ENCODE measurements at regions of chrX and their contacts with region 1.

Region 1: GRCh38 chrX:40013266-40014195 is 84.2 kb downstream of the BCOR start:
- DNase-seq: peak; percentile 67
- ATAC-seq: peak; percentile 73
- H3K4me3 ChIP-seq: peak overlapping the region; percentile 59 to 77 (median 70); a peak in 5 of 6 replicates
- H3K27ac ChIP-seq: peak overlapping the region; percentile 98
- H3K4me1 ChIP-seq: peaks cover 27% of the 10 kb centered on the region
- H3K27me3 ChIP-seq: no peaks in the 10 kb centered on the region
- CTCF ChIP-seq: 0 out of 2 replicates have a peak, but pooled peaks have one; percentile 0
- EP300 ChIP-seq: no peak
- POLR2A ChIP-seq: no peak; a peak in 2 of 4 replicates
- RAD21 ChIP-seq: no peak; the same call in 1 of the 2 replicates

Region 2: DNA sequence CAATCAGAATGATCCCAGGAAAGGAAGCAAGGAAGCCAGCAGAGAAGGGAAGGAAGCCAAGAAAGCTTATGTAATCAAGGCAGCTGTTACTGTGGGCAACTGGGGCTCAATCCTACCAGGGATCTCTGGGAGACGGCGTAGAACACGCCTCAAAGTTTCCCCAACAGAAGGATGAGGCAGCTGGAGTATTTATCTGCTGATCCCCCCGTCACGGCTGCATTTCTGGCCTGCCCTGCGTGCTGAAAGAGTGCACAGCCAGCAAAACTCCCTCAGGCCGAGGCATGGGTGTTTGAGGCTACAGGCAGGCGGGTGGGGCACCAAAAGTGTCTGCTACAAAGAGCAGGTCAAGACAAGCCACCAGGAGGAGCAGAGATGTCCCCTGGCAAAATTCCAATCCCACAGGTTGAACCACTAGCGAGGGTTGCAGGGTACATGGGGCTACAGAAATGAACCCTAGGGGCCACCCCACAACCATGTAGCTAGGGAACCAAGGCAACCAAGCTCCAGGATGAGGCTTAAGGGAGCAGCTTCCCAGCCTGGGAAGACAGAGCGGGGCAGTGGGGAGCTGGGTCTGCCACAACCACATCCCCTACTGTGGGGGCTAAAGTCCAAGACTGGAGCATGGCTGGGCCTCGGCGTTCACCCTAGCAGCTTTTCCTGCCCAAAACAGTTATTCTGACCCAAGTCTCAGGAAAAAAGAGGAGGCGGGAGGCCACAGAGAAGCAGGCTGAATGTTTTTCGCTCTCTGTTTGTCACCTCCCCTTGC is 29.2 kb before region 1 on chrX:
- CTCF ChIA-PET with region 1: no interaction called
- POLR2A ChIA-PET with region 1: interaction called, 19 read pairs
- in situ Hi-C with region 1: no loop called
- intact Hi-C with region 1: no loop called
- DNase-seq: no peak
- ATAC-seq: peak; percentile 77
- H3K4me3 ChIP-seq: no peak overlapping the region
- H3K27ac ChIP-seq: no peak overlapping the region
- H3K4me1 ChIP-seq: peaks cover 46% of the 10 kb centered on the region
- H3K27me3 ChIP-seq: no peaks in the 10 kb centered on the region
- CTCF ChIP-seq: no peak
- EP300 ChIP-seq: no peak
- POLR2A ChIP-seq: no peak
- RAD21 ChIP-seq: no peak

Region 3: DNA sequence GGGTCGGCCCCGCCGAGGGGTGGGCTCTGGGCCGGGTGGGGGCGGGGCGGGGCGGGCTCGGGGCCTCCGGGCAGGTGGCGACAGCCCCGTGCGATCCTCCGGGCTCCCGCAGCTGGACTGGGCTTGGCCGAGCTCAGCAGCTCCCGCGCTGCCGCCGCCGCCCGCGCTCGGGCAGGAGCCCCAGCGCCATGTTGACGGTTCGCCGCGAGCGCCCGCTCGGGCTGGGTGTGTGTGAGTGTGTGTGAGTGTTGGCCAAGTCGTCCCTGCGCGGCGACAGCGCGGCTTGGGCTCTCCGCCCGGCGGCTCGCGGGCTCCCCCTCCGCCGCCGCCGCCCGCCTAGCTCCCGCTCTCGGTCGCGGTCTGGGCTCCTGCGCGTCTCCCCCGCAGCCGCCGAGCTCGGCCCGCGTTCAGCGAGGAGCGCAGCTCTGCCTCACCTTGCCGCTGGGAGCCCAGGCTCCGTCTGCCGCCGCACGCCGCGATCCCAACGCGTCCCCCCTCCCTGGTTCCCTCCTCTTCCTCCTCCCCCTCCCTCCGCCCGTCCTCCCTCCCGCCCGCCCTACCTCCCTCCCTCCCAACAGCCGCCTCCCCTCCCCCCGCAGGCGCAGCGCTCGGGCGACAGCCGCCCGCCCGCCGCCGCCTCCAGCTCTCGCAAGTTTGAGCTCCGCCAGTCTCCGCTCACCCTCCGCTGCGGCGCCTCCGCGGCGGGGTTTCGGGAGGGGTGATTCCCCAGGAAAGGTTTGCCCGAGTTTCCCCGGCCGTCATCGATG is 84.1 kb after region 1 on chrX and contains the start of gene BCOR:
- CTCF ChIA-PET with region 1: no interaction called
- POLR2A ChIA-PET with region 1: interaction called, 41 read pairs
- in situ Hi-C with region 1: no loop called
- intact Hi-C with region 1: loop called (anchors 5 kb)
- DNase-seq: no peak
- ATAC-seq: peak; percentile 27
- H3K4me3 ChIP-seq: peak within 1 kb of the TSS; percentile 69 to 75 (median 73)
- H3K27ac ChIP-seq: peak within 1 kb of the TSS; percentile 73
- H3K4me1 ChIP-seq: peaks cover 39% of the 10 kb centered on the region
- H3K27me3 ChIP-seq: no peaks in the 10 kb centered on the region
- CTCF ChIP-seq: no peak
- EP300 ChIP-seq: no peak
- POLR2A ChIP-seq: peak in 1 of 2 experiments; percentile 89; a peak in 2 of 4 replicates
- RAD21 ChIP-seq: peak; percentile 39; the same call in 1 of the 2 replicates
- total RNA-seq, gene BCOR: 15.2 and 18.6 TPM in 2 replicates

Region 4: DNA sequence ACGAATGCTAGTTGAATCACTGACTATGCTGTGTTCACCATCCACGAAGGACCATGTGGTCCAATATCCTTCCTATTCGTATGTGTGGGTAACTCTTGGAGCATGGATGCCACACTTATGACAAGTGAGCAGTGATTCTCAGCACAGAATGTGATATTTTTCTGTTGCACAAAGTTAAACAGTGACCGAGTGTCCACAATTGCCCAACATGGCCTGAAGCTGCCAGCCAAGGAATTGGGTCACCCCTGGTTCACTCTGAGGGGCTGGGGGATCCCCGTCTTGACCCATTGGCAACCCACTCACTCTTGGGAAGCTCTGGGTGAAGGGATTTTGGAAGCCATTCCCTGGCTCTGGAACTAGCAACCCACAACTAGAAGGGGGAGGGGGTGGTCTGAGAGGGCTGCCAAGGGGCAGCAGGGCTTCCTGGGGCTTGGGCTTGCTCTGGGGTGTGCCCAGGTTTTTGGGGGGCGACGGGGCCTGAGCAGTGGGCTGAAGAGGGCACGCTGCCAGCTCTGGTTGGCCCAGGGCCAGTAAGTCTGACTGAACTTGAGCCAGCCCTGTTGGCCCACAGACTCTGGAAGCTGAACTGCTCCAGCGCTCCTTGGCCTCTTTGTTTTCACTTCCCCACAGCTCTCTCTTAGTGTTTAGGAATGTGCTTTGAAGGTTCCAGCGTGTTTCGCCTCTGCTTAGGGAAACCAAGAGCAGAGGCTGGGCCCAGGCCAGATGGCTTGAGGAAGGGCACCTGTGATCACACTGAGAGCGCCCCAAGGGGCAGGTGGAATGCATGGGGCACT is 127.4 kb after region 1 on chrX:
- CTCF ChIA-PET with region 1: no interaction called
- POLR2A ChIA-PET with region 1: interaction called, 14 read pairs
- in situ Hi-C with region 1: no loop called
- intact Hi-C with region 1: no loop called
- DNase-seq: peak; percentile 56
- ATAC-seq: peak; percentile 82
- H3K4me3 ChIP-seq: peak overlapping the region in 1 of 3 experiments; percentile 43; a peak in 1 of 6 replicates
- H3K27ac ChIP-seq: peak overlapping the region; percentile 54
- H3K4me1 ChIP-seq: peaks cover 50% of the 10 kb centered on the region
- H3K27me3 ChIP-seq: no peaks in the 10 kb centered on the region
- CTCF ChIP-seq: no peak
- EP300 ChIP-seq: no peak
- POLR2A ChIP-seq: no peak
- RAD21 ChIP-seq: no peak